ENCODE measurements at regions of chr4 and their contacts with region 1.

Region 1: GRCh38 chr4:143986180-143986579 is 33.0 kb downstream of the GYPB start:
- DNase-seq: no peak
- ATAC-seq: peak; percentile 48
- H3K4me3 ChIP-seq: no peak overlapping the region
- H3K27ac ChIP-seq: no peak overlapping the region
- H3K4me1 ChIP-seq: no peaks in the 10 kb centered on the region; a peak in 2 of 5 replicates
- H3K27me3 ChIP-seq: no peaks in the 10 kb centered on the region
- CTCF ChIP-seq: no peak
- EP300 ChIP-seq: no peak
- POLR2A ChIP-seq: no peak
- RAD21 ChIP-seq: no peak

Region 2: GRCh38 chr4:143700416-143701352 is 285.5 kb before region 1 on chr4 and contains the start of gene FREM3:
- CTCF ChIA-PET with region 1: no interaction called
- POLR2A ChIA-PET with region 1: no interaction called
- in situ Hi-C with region 1: no loop called
- intact Hi-C with region 1: no loop called
- DNase-seq: no peak
- ATAC-seq: peak; percentile 54
- H3K4me3 ChIP-seq: no peak within 1 kb of the TSS
- H3K27ac ChIP-seq: no peak within 1 kb of the TSS
- H3K4me1 ChIP-seq: peaks cover 0 to 18% of the 10 kb centered on the region in 2 experiments; a peak in 3 of 5 replicates
- H3K27me3 ChIP-seq: peaks cover 13 to 41% of the 10 kb centered on the region in 2 experiments
- CTCF ChIP-seq: no peak
- EP300 ChIP-seq: no peak
- POLR2A ChIP-seq: no peak
- RAD21 ChIP-seq: no peak
- polyA plus RNA-seq, gene FREM3: not detected

Region 3: DNA sequence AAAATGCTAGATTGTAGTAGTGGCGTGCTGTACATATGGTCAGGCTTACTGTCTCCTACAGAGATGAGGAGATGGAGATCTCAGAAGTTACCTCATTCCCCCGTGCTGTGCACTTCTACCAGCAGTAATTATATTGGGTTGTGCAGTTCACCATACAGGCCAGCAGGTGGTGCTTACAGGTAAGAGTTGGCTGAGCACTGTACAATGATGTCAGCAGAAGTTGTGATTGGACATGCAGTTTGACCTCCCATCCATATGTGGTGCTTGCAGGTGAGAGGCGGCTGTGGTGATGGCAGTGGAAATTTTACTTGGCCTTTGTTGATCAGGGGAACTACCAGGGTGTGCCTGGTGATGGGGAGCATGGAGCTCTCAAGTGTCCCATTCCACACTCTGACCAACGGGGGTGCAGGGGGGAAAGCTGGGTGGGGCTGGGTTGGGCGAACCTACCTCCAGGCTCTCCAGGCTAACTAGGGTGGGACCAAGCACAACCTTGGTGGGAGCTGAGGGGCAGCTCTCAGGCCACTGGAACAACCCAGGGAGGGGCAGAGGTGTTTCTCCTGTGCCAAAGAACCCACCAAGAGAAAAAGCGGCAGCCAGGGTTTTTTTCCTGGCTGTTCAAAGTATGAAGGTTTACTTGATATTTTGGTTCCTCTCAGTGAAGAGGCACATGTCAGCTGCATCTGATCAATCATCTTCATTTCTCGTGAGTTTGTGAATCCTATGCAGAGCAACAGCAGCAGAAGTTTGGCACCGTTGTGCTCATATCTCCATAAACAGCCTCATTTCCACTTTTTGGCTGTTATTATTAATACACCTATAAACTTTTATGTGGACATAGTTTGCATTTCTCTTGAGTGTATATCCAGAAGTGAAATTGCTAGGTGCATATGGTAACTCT is 211.9 kb before region 1 on chr4:
- CTCF ChIA-PET with region 1: no interaction called
- POLR2A ChIA-PET with region 1: no interaction called
- in situ Hi-C with region 1: loop called (anchors 10 kb)
- intact Hi-C with region 1: no loop called
- DNase-seq: peak; percentile 50 to 88 (median 71)
- ATAC-seq: peak; percentile 99
- H3K4me3 ChIP-seq: no peak overlapping the region
- H3K27ac ChIP-seq: no peak overlapping the region; the same call in 2 of the 3 replicates
- H3K4me1 ChIP-seq: peaks cover 3 to 7% of the 10 kb centered on the region in 2 experiments; a peak in 3 of 5 replicates
- H3K27me3 ChIP-seq: no peaks in the 10 kb centered on the region
- CTCF ChIP-seq: peak; percentile 94
- EP300 ChIP-seq: peak; percentile 60
- POLR2A ChIP-seq: no peak
- RAD21 ChIP-seq: peak; percentile 96 to 98

Region 4: DNA sequence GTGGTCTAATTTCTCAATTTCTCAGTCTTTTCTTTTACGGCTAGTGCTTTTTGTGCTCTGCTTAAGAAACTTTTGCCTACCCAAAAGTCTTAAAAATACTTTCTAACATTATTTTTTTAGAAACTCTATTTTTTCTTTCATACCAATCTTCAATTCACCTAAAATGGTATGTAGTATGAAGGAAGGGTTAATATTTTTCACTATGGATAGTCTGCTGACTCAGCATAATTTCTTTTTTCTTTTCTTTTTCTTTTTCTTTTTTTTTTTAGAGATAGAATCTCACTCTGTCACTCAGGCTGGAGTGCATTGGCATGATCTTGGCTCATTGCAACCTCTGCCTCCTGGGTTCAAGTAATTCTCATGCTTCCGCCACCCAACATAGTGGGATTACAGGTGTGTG is 46.7 kb before region 1 on chr4:
- CTCF ChIA-PET with region 1: no interaction called
- POLR2A ChIA-PET with region 1: no interaction called
- in situ Hi-C with region 1: no loop called
- intact Hi-C with region 1: no loop called
- DNase-seq: no peak
- ATAC-seq: no peak
- H3K4me3 ChIP-seq: no peak overlapping the region
- H3K27ac ChIP-seq: no peak overlapping the region
- H3K4me1 ChIP-seq: no peaks in the 10 kb centered on the region; a peak in 1 of 5 replicates
- H3K27me3 ChIP-seq: no peaks in the 10 kb centered on the region
- CTCF ChIP-seq: no peak
- EP300 ChIP-seq: no peak
- POLR2A ChIP-seq: no peak
- RAD21 ChIP-seq: no peak

Region 5: DNA sequence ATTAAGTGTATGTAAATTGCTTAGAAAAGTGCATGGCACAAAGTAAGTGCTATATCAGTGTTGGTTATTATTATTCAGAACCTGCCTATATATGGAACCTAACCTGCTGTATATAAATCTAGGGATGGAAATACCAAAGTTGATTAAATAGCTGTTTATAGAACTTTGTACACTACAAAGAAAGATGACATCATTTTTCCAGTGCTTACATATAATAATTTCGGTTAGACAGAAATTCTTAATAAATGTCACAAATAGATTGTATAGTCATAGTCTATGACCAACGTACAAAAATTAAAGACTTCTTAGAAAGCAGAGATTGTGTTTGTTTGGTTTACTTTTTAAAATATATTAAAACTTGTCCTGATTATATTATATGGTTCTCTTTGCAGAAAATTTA is 28.6 kb after region 1 on chr4:
- CTCF ChIA-PET with region 1: no interaction called
- POLR2A ChIA-PET with region 1: no interaction called
- in situ Hi-C with region 1: no loop called
- intact Hi-C with region 1: loop called (anchors 5 kb)
- DNase-seq: no peak
- ATAC-seq: no peak
- H3K4me3 ChIP-seq: no peak overlapping the region
- H3K27ac ChIP-seq: no peak overlapping the region
- H3K4me1 ChIP-seq: no peaks in the 10 kb centered on the region; a peak in 1 of 5 replicates
- H3K27me3 ChIP-seq: no peaks in the 10 kb centered on the region
- CTCF ChIP-seq: no peak
- EP300 ChIP-seq: no peak
- POLR2A ChIP-seq: no peak
- RAD21 ChIP-seq: no peak

Region 6: GRCh38 chr4:144090744-144091143 is 104.6 kb after region 1 on chr4:
- CTCF ChIA-PET with region 1: no interaction called
- POLR2A ChIA-PET with region 1: no interaction called
- in situ Hi-C with region 1: loop called (anchors 5 kb)
- intact Hi-C with region 1: no loop called
- DNase-seq: no peak
- ATAC-seq: peak; percentile 55
- H3K4me3 ChIP-seq: no peak overlapping the region
- H3K27ac ChIP-seq: no peak overlapping the region
- H3K4me1 ChIP-seq: no peaks in the 10 kb centered on the region; a peak in 1 of 5 replicates
- H3K27me3 ChIP-seq: no peaks in the 10 kb centered on the region
- CTCF ChIP-seq: 0 out of 6 replicates have a peak, but pooled peaks of 1 of the 3 experiments have one; percentile 34
- EP300 ChIP-seq: no peak
- POLR2A ChIP-seq: no peak
- RAD21 ChIP-seq: no peak

Measured in K562 (cell line).